Posterior vena cava (tissue), 2 donors: ENCODE measurements at regions of chr5 and their contacts with region 1.

Region 1: GRCh38 chr5:38751103-38751502 is 94.7 kb upstream of the OSMR start:
- DNase-seq: no peak

Region 2: GRCh38 chr5:37222176-37222575 is 1528.9 kb before region 1 on chr5:
- intact Hi-C with region 1: loop called in 1 of 2 experiments (anchors 5 kb)
- DNase-seq: no peak

Region 3: DNA sequence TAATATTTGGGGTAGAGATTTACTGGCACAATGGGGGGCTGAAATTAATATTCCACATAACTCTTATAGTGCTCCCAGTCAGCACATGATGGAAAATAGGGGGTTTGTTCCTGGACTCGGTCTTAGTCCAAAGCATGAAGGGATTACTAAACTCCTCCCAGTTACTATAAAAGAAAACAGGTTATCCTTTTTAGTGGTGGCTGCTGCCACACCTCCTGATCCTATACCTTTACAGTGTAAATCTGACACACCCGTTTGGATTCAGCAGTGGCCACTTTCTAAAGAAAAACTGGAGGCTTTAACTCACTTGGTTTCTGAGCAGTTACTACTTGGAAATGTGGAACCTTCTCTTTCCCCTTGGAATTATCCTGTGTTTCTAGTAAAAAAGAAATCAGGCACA is 1355.7 kb after region 1 on chr5:
- intact Hi-C with region 1: no loop called
- DNase-seq: no peak